Caco-2 (cell line): ENCODE measurements at regions of chr2 and their contacts with region 1.

Region 1: DNA sequence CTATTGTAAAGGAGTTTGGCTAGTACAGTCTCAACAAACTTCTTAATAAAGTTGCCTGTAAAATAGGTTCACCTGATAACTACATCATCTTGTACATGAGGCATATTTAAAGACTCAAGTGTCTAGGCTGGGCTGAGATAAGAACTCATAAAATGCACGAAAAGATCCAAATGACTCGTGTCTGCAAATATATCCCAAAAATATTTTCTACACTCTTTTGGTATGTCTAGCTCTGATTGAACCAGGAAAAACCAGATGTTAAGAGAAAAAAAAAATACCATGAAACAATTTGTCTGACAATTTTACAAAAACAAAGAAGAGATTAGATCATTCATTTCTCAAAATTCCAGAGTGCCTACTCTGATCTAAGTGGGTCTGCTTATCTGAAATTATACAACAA is 166.9 kb upstream of the OSR1 start:
- DNase-seq: no peak
- H3K4me3 ChIP-seq: no peak overlapping the region
- H3K4me3 Mint-ChIP-seq: no peak overlapping the region
- H3K27ac Mint-ChIP-seq: no peak overlapping the region
- H3K4me1 ChIP-seq: no peaks in the 10 kb centered on the region
- H3K4me1 Mint-ChIP-seq: no peaks in the 10 kb centered on the region
- H3K27me3 ChIP-seq: no peaks in the 10 kb centered on the region
- H3K27me3 Mint-ChIP-seq: no peaks in the 10 kb centered on the region
- CTCF ChIP-seq: no peak

Region 2: DNA sequence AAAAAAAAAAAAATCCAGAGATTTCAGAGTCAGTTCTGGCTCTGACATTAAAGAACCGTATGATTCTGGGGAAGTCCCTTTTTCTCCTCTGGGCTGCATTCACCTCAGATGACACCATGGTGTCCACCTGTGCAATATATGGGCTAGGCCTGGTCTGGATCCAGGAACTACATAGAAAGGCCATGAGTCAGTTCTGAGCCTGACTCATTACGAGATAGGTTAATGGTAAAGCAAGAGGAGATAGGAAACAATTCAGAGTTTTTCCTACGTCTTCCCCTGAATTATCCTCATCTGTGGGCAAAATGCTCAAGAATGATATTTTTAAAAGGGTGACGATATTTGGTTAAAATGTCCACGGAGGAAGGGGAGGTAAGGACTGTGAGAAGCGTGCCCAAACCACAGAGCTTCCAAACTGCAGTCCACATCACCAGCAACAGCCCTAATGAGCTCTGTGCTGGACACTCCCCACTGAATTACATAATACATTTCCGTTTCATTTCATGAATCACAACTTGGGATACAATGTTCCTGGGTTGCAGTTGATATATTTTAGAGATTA is 13.2 kb after region 1 on chr2:
- CTCF ChIA-PET with region 1: no interaction called
- POLR2A ChIA-PET with region 1: no interaction called
- intact Hi-C with region 1: loop called (anchors 1 kb)
- DNase-seq: peak; percentile 14 to 47
- H3K4me3 ChIP-seq: no peak overlapping the region
- H3K4me3 Mint-ChIP-seq: no peak overlapping the region
- H3K27ac Mint-ChIP-seq: no peak overlapping the region
- H3K4me1 ChIP-seq: peaks cover 6% of the 10 kb centered on the region; the same call in 1 of the 2 replicates
- H3K4me1 Mint-ChIP-seq: no peaks in the 10 kb centered on the region
- H3K27me3 ChIP-seq: no peaks in the 10 kb centered on the region
- H3K27me3 Mint-ChIP-seq: no peaks in the 10 kb centered on the region
- CTCF ChIP-seq: no peak